B cell (primary cell): ENCODE measurements at regions of chr6 and their contacts with region 1.

Region 1: DNA sequence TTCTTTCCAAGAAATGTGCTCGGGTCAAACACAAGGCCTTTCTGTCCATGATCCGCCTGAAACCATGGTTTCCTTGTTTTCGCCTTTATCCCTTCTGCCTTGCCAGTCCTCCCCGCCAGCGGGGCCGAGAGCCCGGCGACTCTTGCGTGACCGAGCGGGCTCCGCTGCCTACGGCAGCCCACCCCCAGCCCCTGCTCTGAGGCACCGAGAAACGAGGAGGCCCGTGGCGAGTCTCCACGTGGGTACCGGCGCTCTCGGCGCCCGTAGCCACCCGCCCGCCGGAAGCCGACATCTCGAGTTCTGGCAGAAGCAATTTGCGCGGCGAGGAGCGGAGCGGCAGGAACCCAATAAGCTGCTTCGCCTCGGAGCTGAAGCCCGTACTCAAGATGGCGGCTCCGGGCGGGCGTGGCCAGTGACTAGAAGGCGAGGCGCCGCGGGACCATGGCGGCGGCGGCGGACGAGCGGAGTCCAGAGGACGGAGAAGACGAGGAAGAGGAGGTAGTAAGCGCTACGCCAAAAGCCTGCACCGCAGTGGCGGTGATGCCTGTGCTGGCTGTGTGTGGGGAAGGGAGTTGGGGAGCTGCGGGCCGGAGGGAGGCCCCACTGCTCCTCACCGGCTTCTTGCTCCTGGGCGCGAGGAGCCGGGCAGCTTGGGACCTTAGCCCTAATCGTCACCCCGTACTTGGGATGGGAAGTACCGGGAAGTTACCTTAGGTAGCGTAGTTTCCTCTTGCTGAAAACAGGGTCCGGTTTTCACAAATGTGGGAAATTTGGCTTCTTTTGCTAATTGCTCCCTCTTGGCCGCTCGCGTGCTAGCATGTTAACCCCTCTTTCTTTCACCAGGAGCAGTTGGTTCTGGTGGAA is at the start of gene GTF3C6:
- DNase-seq: peak; percentile 94
- ATAC-seq: peak; percentile 99
- H3K4me3 ChIP-seq: peak within 1 kb of the TSS; percentile 65 to 96 (median 93)
- H3K4me3 Mint-ChIP-seq: peak within 1 kb of the TSS; percentile 98
- H3K27ac ChIP-seq: peak within 1 kb of the TSS; percentile 88 to 94
- H3K27ac Mint-ChIP-seq: peak within 1 kb of the TSS; percentile 98
- H3K4me1 ChIP-seq: peaks cover 8 to 16% of the 10 kb centered on the region in 2 donors
- H3K4me1 Mint-ChIP-seq: peaks cover 17% of the 10 kb centered on the region
- H3K27me3 ChIP-seq: no peaks in the 10 kb centered on the region
- H3K27me3 Mint-ChIP-seq: peaks cover 4% of the 10 kb centered on the region
- CTCF ChIP-seq: no peak
- total RNA-seq, gene GTF3C6: 34.7 and 36.4 TPM in 2 replicates

Region 2: DNA sequence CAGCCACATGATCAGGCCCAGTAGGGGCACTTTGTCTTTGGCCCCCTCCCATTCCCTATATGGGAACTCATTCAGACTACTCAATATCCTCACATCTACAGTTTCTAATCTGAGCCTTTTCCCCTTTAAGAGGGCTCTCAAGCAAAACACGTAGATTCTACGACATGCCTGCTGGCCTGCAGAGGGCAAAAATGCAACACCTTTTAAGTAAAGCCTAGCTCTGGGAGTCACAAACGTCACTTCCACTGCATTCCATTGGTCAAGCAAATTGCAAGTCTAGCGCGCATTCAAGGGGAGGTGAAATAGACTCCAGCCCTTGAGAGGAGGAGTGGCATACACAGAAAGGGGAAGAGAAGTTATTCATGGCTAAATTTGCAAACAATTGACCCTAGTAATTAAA is 707.7 kb before region 1 on chr6:
- CTCF ChIA-PET with region 1: no interaction called
- POLR2A ChIA-PET with region 1: no interaction called
- intact Hi-C with region 1: no loop called
- DNase-seq: no peak
- ATAC-seq: no peak
- H3K4me3 ChIP-seq: no peak overlapping the region
- H3K4me3 Mint-ChIP-seq: no peak overlapping the region
- H3K27ac ChIP-seq: no peak overlapping the region
- H3K27ac Mint-ChIP-seq: no peak overlapping the region
- H3K4me1 ChIP-seq: no peaks in the 10 kb centered on the region
- H3K4me1 Mint-ChIP-seq: no peaks in the 10 kb centered on the region
- H3K27me3 ChIP-seq: peaks cover 0 to 9% (median 0%) of the 10 kb centered on the region in 4 experiments
- H3K27me3 Mint-ChIP-seq: peaks cover 10% of the 10 kb centered on the region
- CTCF ChIP-seq: no peak

Region 3: GRCh38 chr6:110981202-110981600 is 22.6 kb after region 1 on chr6:
- CTCF ChIA-PET with region 1: interaction called, 7 read pairs
- POLR2A ChIA-PET with region 1: interaction called, 15 read pairs
- intact Hi-C with region 1: loop called (anchors 1 kb)
- DNase-seq: peak; percentile 43
- ATAC-seq: no peak
- H3K4me3 ChIP-seq: peak overlapping the region; percentile 73 to 98 (median 87)
- H3K4me3 Mint-ChIP-seq: peak overlapping the region; percentile 98
- H3K27ac ChIP-seq: peak overlapping the region; percentile 77 to 93
- H3K27ac Mint-ChIP-seq: peak overlapping the region; percentile 99
- H3K4me1 ChIP-seq: peaks cover 13 to 18% of the 10 kb centered on the region in 2 donors
- H3K4me1 Mint-ChIP-seq: peaks cover 34% of the 10 kb centered on the region
- H3K27me3 ChIP-seq: no peaks in the 10 kb centered on the region
- H3K27me3 Mint-ChIP-seq: no peaks in the 10 kb centered on the region
- CTCF ChIP-seq: no peak